Common myeloid progenitor, CD34-positive (primary cell): ENCODE measurements at regions of chr1 and their contacts with region 1.

Region 1: GRCh38 chr1:248837794-248838356 is at the start of gene ZNF672:
- DNase-seq: peak; percentile 92 to 96 (median 95)
- H3K4me3 ChIP-seq: peak within 1 kb of the TSS; percentile 78 to 93 (median 87)
- H3K27ac ChIP-seq: peak within 1 kb of the TSS; percentile 91 to 97
- H3K4me1 ChIP-seq: peaks cover 11 to 54% (median 35%) of the 10 kb centered on the region in 4 experiments
- H3K27me3 ChIP-seq: no peaks in the 10 kb centered on the region

Region 2: GRCh38 chr1:248825909-248826760 is 11.7 kb before region 1 on chr1 and contains the start of gene SH3BP5L:
- CTCF ChIA-PET with region 1: interaction called, 10 read pairs
- POLR2A ChIA-PET with region 1: interaction called, 16 read pairs
- DNase-seq: peak; percentile 96 to 98 (median 98)
- H3K4me3 ChIP-seq: peak within 1 kb of the TSS; percentile 90 to 99 (median 95)
- H3K27ac ChIP-seq: peak within 1 kb of the TSS; percentile 99 to 100
- H3K4me1 ChIP-seq: peaks cover 22 to 40% (median 31%) of the 10 kb centered on the region in 4 experiments
- H3K27me3 ChIP-seq: no peaks in the 10 kb centered on the region

Region 3: DNA sequence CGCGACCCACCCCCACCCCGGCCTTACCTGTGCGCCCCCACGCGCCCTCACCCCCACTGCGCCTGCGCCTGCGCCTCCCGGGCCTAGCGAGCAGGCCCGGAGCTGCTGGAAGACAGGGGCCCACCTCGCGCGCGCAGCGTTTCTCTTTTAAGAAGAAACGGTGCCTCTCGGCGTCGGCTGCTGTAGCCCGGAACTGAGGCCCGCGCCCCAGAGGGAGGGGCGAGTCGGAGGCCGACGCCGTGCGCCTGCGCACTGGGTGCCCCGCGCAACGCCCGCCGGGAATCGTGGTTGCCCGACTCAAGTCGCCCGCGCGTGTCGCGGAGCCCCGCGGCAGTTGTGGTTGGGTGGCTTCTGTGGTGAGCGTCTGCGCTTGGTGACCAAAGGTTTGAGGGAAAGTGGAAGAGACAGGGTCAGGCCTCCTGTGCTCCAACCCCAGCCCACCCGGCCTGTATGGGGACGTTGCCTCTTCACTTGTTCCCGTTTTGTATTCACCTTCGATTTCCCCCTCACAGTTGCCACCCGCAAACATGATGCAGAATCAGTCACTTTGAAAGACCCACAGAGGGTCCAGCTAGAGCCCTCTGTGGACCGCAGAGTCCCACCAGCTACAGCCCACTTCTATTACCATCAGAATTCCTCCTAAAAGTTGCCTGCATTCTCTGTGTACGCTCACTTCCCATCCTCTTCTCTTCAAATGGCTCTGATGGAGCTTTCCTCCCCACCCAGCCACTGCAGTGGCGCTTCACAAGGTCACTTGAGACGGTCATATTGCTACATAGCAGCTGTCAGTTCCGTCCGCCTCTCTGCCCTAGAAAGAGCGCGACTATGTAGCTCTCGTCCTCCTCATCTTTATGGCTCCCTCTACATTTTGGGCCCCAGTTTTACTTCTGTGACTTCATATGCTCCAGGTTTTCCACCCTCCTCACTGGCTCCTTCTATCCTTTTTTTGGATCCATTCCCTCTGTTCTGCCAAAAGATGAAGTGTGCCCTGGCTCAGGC is 21.3 kb after region 1 on chr1 and contains the start of gene ZNF692:
- CTCF ChIA-PET with region 1: interaction called, 53 read pairs
- POLR2A ChIA-PET with region 1: interaction called, 17 read pairs
- DNase-seq: peak; percentile 98 to 99 (median 99)
- H3K4me3 ChIP-seq: peak within 1 kb of the TSS; percentile 20 to 85 (median 72)
- H3K27ac ChIP-seq: peak within 1 kb of the TSS; percentile 81 to 84
- H3K4me1 ChIP-seq: peaks cover 2 to 48% (median 43%) of the 10 kb centered on the region in 4 experiments
- H3K27me3 ChIP-seq: no peaks in the 10 kb centered on the region

Region 4: GRCh38 chr1:248873409-248873992 is 35.6 kb after region 1 on chr1:
- CTCF ChIA-PET with region 1: interaction called, 13 read pairs
- POLR2A ChIA-PET with region 1: interaction called, 3 read pairs
- DNase-seq: peak; percentile 94 to 98 (median 97)
- H3K4me3 ChIP-seq: peak overlapping the region; percentile 76 to 92 (median 86)
- H3K27ac ChIP-seq: peak overlapping the region; percentile 79 to 94
- H3K4me1 ChIP-seq: peaks cover 2 to 16% (median 7%) of the 10 kb centered on the region in 4 experiments
- H3K27me3 ChIP-seq: no peaks in the 10 kb centered on the region